ENCODE measurements at regions of chr12 and their contacts with region 1.

Region 1: GRCh38 chr12:65121049-65121955 is at the start of gene WIF1:
- DNase-seq: no peak
- ATAC-seq: peak; percentile 87
- H3K4me3 ChIP-seq: peak within 1 kb of the TSS; percentile 60; the same call in 1 of the 2 replicates
- H3K27ac ChIP-seq: no peak within 1 kb of the TSS
- H3K4me1 ChIP-seq: no peaks in the 10 kb centered on the region; the same call in 1 of the 2 replicates
- H3K27me3 ChIP-seq: peaks cover 2 to 5% of the 10 kb centered on the region in 2 experiments; a peak in 3 of 4 replicates
- CTCF ChIP-seq: peak; percentile 31 to 45 (median 41); a peak in 5 of 6 replicates
- EP300 ChIP-seq: no peak
- POLR2A ChIP-seq: no peak
- RAD21 ChIP-seq: 0 out of 2 replicates have a peak, but pooled peaks have one; percentile 12
- polyA plus RNA-seq, gene WIF1: 0.05 TPM in 1 of 2 experiments, not detected in the other

Region 2: DNA sequence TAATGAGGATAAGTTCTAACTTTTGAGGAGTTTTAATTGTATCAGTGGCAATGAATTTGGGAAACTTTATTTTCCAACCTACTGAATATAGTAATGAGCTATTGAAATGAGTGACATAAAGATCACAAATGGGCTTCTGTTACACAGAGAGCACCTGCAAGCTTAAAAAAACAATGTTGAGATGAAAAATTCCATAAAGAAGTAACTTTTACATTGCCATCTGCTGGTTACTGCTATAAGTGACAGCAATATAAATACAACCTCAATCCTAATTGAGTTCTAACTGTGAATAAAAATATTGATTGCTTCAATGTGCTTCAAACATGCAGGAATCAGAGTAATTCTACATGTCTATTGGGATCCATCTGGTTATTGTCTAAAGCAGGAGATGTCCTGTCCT is 14.4 kb before region 1 on chr12:
- CTCF ChIA-PET with region 1: interaction called, 12 read pairs
- POLR2A ChIA-PET with region 1: no interaction called
- RAD21 ChIA-PET with region 1: interaction called, 3 read pairs
- SMC1A ChIA-PET with region 1: interaction called, 4 read pairs
- in situ Hi-C with region 1: no loop called
- intact Hi-C with region 1: no loop called
- DNase-seq: no peak
- ATAC-seq: no peak
- H3K4me3 ChIP-seq: no peak overlapping the region
- H3K27ac ChIP-seq: no peak overlapping the region
- H3K4me1 ChIP-seq: no peaks in the 10 kb centered on the region
- H3K27me3 ChIP-seq: no peaks in the 10 kb centered on the region; a peak in 1 of 4 replicates
- CTCF ChIP-seq: peak; percentile 33 to 50 (median 39); a peak in 4 of 6 replicates
- EP300 ChIP-seq: no peak
- POLR2A ChIP-seq: no peak
- RAD21 ChIP-seq: peak; percentile 33